Caco-2 (cell line): ENCODE measurements at regions of chr17 and their contacts with region 1.

Region 1: GRCh38 chr17:17739388-17740066 is 58.3 kb downstream of the RAI1 start:
- DNase-seq: no peak
- H3K4me3 ChIP-seq: no peak overlapping the region
- H3K4me3 Mint-ChIP-seq: no peak overlapping the region
- H3K27ac Mint-ChIP-seq: no peak overlapping the region
- H3K4me1 ChIP-seq: peaks cover 8% of the 10 kb centered on the region
- H3K4me1 Mint-ChIP-seq: peaks cover 9% of the 10 kb centered on the region
- H3K27me3 ChIP-seq: no peaks in the 10 kb centered on the region
- H3K27me3 Mint-ChIP-seq: no peaks in the 10 kb centered on the region
- CTCF ChIP-seq: no peak

Region 2: DNA sequence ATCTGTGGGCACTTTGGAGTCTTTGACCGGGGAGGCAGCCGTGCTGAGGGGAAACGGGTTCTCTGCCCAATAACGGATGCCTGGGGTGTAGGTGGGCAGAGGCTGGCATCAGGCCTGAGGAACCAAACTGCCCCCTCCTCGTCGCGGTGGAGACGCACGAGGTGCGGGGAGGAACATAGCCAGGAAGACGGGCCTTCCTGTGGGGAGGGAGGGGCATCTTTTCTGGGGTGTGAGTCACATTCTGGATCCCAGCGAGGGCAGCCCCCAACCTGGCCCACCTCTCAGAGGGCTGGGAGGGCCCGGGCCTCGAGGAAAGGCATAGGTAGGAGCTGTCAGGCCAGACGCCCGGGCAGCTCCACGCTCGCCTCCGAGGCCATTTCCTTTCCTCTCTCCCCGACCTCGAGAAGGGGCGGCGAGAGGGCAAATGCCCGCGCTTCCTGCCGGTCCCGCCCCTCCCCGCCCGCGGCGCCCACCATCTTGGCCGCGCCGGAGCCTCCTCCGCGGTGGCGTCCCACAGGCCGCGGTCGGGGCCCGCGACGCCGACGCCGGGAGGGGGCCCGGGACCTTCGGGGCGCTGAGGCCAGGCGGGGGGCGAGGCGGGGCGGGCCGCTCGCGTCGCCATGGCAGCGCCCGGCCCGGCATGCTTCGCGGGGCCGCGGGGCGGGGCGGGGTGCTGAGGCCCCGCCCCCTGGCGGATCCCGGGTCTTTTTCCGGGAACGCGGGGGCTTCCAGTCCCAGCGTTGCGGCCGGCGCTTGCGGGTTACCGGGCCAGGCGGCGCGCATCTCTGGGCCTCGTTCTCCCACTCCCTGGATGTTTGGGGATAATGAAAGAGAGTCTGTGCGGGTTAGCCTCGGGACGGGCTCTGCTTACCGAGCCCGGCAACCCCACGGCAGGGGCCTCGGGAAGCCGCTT is 45.1 kb before region 1 on chr17:
- CTCF ChIA-PET with region 1: no interaction called
- POLR2A ChIA-PET with region 1: no interaction called
- intact Hi-C with region 1: loop called (anchors 5 kb)
- DNase-seq: peak; percentile 73 to 84
- H3K4me3 ChIP-seq: peak overlapping the region; percentile 82
- H3K4me3 Mint-ChIP-seq: peak overlapping the region; percentile 90
- H3K27ac Mint-ChIP-seq: peak overlapping the region; percentile 99
- H3K4me1 ChIP-seq: peaks cover 44% of the 10 kb centered on the region
- H3K4me1 Mint-ChIP-seq: peaks cover 68% of the 10 kb centered on the region
- H3K27me3 ChIP-seq: no peaks in the 10 kb centered on the region
- H3K27me3 Mint-ChIP-seq: no peaks in the 10 kb centered on the region
- CTCF ChIP-seq: no peak